Activated CD4-positive, alpha-beta T cell treated with anti-CD3 and anti-CD28 coated beads, Interleukin-2, amount 10 ng/mL, durations not matched to agents 24 days and 14 days (primary cell): ENCODE measurements at regions of chr11 and their contacts with region 1.

Region 1: GRCh38 chr11:27698872-27699474 is 1.3 kb downstream of the BDNF start:
- DNase-seq: peak; percentile 84
- H3K4me3 Mint-ChIP-seq: peak overlapping the region; percentile 11
- H3K27ac Mint-ChIP-seq: no peak overlapping the region
- H3K4me1 Mint-ChIP-seq: peaks cover 20% of the 10 kb centered on the region
- H3K27me3 Mint-ChIP-seq: peaks cover 57% of the 10 kb centered on the region

Region 2: DNA sequence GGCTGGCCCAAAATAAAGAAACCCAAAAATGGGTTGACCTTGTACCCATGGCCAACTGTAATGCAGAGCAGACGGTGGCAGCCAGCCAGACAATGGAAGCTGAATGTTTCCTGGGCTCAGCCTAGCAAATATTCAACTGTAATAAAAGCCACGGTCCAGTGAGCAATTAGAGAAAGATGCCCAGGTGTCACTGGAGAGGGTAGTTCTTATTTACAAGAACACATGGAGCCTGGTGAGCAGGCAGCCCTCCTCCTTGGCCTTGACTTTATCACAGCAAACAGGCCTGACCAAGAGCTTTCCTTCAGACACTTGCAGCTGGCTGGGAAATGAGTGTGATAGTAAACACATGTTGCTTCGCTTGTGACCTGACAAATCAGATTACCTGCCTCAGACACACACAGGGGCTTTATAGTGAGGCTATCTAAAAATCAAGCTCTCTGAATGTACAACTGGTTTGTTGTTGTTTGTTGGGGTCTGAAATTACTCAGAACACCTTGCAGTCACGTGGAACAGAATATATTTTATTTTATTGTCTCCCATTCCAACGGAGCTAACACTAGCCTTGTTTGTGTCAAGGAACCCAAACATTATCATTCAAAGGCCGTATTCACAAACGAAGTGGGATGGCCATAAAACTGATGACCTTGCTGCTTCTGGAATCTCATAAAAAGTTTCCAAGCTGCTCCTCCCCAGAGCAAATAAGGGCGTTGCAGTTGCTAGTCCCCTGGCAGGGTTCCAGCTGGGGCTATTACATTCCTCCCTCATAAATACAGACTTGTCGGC is 497.3 kb before region 1 on chr11:
- intact Hi-C with region 1: no loop called
- DNase-seq: peak; percentile 31
- H3K4me3 Mint-ChIP-seq: no peak overlapping the region
- H3K27ac Mint-ChIP-seq: no peak overlapping the region
- H3K4me1 Mint-ChIP-seq: no peaks in the 10 kb centered on the region
- H3K27me3 Mint-ChIP-seq: no peaks in the 10 kb centered on the region

Region 3: GRCh38 chr11:27392278-27393114 is 306.5 kb before region 1 on chr11:
- intact Hi-C with region 1: no loop called
- DNase-seq: no peak
- H3K4me3 Mint-ChIP-seq: no peak overlapping the region
- H3K27ac Mint-ChIP-seq: no peak overlapping the region
- H3K4me1 Mint-ChIP-seq: peaks cover 2% of the 10 kb centered on the region
- H3K27me3 Mint-ChIP-seq: peaks cover 2% of the 10 kb centered on the region

Region 4: DNA sequence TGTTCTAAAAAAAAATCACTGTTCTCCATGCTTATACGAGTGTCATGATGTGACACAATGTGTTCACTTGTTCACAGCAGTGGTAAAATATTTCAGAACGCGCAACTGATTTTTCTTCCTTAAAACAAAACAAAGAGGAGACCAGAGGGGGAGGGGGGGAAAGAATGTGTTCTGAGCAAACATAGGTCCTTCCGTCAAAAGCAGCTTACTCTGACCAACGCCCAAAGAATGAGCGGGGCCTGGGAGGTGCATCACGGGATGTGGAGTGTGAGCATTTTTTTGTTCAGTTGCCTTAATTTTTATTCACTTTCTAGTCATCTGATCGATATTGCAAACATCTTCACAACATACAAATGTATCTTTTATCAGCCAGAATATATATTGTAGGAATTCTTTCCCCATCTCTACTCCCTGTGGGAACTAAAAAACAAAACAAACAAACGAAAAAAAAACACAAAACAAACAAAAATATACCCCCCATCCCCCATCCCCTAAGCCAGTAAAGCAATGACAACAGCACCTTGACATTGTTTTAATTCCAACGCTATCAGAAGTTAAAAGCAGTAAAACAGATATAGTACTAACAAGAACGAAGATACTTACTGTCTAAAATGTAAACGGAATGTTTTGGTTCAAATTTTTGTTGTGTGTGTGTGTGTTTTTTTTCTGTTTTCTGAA is 42.0 kb before region 1 on chr11:
- intact Hi-C with region 1: no loop called
- DNase-seq: no peak
- H3K4me3 Mint-ChIP-seq: no peak overlapping the region
- H3K27ac Mint-ChIP-seq: no peak overlapping the region
- H3K4me1 Mint-ChIP-seq: no peaks in the 10 kb centered on the region
- H3K27me3 Mint-ChIP-seq: no peaks in the 10 kb centered on the region

Region 5: GRCh38 chr11:27720277-27720830 is 21.4 kb after region 1 on chr11:
- intact Hi-C with region 1: loop called (anchors 2 kb)
- DNase-seq: peak; percentile 74
- H3K4me3 Mint-ChIP-seq: no peak overlapping the region
- H3K27ac Mint-ChIP-seq: no peak overlapping the region
- H3K4me1 Mint-ChIP-seq: no peaks in the 10 kb centered on the region
- H3K27me3 Mint-ChIP-seq: peaks cover 61% of the 10 kb centered on the region

Region 6: DNA sequence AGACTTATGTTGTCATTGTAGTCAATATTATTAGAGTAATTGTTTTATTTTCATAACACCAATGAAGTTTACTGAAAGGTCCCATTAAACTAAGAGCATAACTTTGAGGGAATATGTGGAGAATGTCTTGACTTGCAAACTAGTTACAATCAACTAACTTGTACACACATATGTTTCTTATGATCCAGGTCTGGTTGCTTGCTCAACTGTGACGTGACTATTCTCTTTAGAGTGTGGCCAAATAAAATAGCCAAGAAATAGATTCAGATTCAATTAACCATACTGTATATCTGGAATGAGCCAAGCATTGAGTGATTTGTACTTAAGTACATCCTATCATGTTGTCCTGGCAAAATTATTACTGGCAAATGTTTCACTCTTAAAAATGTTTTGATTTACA is 510.9 kb after region 1 on chr11:
- intact Hi-C with region 1: no loop called
- DNase-seq: no peak
- H3K4me3 Mint-ChIP-seq: no peak overlapping the region
- H3K27ac Mint-ChIP-seq: no peak overlapping the region
- H3K4me1 Mint-ChIP-seq: no peaks in the 10 kb centered on the region
- H3K27me3 Mint-ChIP-seq: no peaks in the 10 kb centered on the region

Region 7: GRCh38 chr11:28697920-28698827 is 999.2 kb after region 1 on chr11:
- intact Hi-C with region 1: loop called (anchors 5 kb)
- DNase-seq: peak; percentile 68
- H3K4me3 Mint-ChIP-seq: no peak overlapping the region
- H3K27ac Mint-ChIP-seq: no peak overlapping the region
- H3K4me1 Mint-ChIP-seq: no peaks in the 10 kb centered on the region
- H3K27me3 Mint-ChIP-seq: no peaks in the 10 kb centered on the region

Region 8: DNA sequence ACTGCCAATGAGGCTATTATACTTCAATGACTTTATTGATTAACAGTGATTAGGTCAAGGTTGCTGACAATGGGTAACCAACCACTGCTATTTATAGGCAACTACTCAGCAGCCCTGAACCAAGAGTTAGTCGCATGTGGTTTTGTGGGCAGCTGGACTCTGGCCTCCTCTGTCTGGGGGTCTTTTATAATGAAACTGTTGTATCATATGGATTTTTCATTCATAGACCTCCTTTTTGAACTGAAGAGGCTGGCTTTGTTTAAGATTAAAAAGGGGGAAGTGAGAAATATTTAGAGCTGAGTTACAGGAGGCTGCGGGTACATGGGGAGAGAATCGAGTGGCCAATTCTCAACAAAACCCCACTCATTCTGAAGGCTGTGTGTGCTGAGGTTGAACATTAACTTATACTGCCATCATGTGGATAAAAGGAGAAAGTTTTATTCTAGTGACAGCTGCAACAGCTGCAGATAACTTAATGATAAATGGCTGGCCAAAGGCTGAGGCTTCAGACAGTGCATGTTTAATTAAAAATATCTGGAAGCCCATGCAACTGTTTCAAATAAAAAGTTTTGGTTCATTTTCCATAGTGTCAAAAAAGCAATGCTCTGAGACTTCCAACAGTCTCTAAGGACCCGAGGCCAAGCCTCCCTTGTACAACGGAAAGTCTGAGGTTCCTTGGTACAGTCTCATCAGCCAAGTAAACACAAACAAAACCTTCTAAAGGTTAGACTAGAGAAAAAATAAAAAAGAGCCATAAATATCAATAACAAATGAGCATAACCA is 1635.2 kb after region 1 on chr11:
- intact Hi-C with region 1: loop called (anchors 5 kb)
- DNase-seq: no peak
- H3K4me3 Mint-ChIP-seq: no peak overlapping the region
- H3K27ac Mint-ChIP-seq: no peak overlapping the region
- H3K4me1 Mint-ChIP-seq: no peaks in the 10 kb centered on the region
- H3K27me3 Mint-ChIP-seq: no peaks in the 10 kb centered on the region